Activated B cell treated with CpG ODN at 0.5 μM for 24 hours (primary cell): ENCODE measurements at regions of chr2 and their contacts with region 1.

Region 1: DNA sequence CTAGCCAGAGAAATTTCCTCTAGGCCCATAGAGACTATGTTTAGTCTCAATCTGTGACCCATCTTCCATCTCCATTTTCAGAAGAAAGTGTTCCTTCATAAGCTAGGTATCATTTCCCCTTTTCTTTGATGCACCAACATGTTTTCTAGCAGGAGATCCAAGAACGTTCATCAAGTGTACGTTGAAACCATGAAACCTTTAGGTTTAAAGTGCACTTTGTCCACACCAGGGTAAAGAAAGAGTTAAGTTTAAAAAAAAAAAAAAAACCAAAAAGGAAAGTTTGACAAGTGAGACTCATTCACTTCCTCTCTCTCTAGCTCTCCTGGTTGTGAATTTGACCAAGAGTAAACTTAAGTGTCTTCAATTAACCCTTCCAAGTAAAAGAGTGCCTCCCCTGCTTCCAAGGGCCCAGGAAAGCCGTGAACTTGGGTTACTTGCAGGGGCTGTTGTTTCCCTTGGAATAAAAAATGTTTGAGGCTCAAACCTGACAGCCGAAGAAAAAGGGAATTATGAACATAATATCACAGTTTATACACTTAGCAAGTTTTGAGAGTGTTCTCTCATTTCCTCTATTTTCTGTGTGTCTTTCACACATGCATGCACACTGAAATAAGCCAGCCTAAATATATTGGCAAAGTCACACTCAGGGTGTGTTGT is 56.7 kb downstream of the LBH start:
- DNase-seq: peak; percentile 53
- ATAC-seq: peak; percentile 83
- H3K4me3 Mint-ChIP-seq: peak overlapping the region; percentile 83
- H3K27ac Mint-ChIP-seq: peak overlapping the region; percentile 92
- H3K4me1 Mint-ChIP-seq: peaks cover 92% of the 10 kb centered on the region
- H3K27me3 Mint-ChIP-seq: no peaks in the 10 kb centered on the region
- CTCF ChIP-seq: no peak

Region 2: GRCh38 chr2:30273261-30273861 is 14.6 kb before region 1 on chr2:
- CTCF ChIA-PET with region 1: interaction called, 4 read pairs
- POLR2A ChIA-PET with region 1: interaction called, 43 read pairs
- intact Hi-C with region 1: loop called (anchors 1 kb)
- DNase-seq: no peak
- ATAC-seq: no peak
- H3K4me3 Mint-ChIP-seq: no peak overlapping the region
- H3K27ac Mint-ChIP-seq: peak overlapping the region; percentile 72
- H3K4me1 Mint-ChIP-seq: peaks cover 93% of the 10 kb centered on the region
- H3K27me3 Mint-ChIP-seq: no peaks in the 10 kb centered on the region
- CTCF ChIP-seq: no peak

Region 3: GRCh38 chr2:30321466-30321865 is 33.5 kb after region 1 on chr2:
- CTCF ChIA-PET with region 1: no interaction called
- POLR2A ChIA-PET with region 1: interaction called, 14 read pairs
- intact Hi-C with region 1: no loop called
- DNase-seq: no peak
- ATAC-seq: no peak
- H3K4me3 Mint-ChIP-seq: no peak overlapping the region
- H3K27ac Mint-ChIP-seq: no peak overlapping the region
- H3K4me1 Mint-ChIP-seq: peaks cover 47% of the 10 kb centered on the region
- H3K27me3 Mint-ChIP-seq: no peaks in the 10 kb centered on the region
- CTCF ChIP-seq: no peak